Lower leg skin (tissue), 4 donors: ENCODE measurements at regions of chr9 and their contacts with region 1.

Region 1: DNA sequence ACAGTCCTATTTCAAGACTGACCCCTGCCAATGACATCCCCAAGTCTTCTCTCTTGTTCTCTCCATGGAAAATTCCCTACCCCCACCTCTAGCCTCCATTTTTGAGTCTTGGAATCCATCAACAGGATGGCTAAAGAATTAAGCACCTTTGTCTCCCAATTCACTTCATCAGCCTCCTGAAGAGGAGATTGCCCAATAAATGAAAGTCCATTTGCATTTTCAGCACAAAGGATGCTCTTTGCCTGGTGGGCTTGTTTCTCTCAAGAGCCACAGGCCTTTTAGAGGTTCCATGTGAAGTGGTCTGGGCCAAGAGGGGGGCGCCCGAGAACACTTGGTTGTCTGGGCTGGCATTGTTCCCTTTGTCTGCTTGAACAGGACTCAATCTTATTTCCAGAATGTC is 12.6 kb downstream of the HSD17B3 start:
- DNase-seq: no peak
- H3K4me3 ChIP-seq: no peak overlapping the region
- CTCF ChIP-seq: no peak
- POLR2A ChIP-seq: no peak

Region 2: GRCh38 chr9:95102001-95102433 is 1187.4 kb before region 1 on chr9:
- intact Hi-C with region 1: no loop called
- DNase-seq: peak in 1 of 2 donors; percentile 62
- H3K4me3 ChIP-seq: no peak overlapping the region
- CTCF ChIP-seq: no peak
- POLR2A ChIP-seq: no peak

Region 3: DNA sequence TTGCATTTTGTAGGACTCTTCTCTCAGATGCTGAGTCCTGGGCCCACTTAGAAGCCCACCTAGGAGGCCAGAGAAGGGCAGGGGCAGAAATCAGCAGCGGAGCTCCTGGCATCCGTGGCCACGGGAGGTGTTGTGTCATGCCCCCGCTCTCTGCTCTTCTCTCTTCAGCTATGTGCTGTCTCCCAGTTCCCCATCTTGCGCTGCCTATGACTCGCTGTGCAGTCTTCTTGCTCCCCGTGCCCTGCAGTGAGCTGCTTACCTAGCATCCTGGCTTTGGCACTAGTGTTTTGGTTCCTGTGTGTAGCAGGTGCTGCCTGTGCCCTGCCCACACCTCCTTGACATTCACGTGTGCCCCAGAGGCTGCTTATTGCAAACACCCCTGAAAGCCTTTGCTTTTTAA is 685.9 kb before region 1 on chr9:
- intact Hi-C with region 1: loop called (anchors 5 kb)
- DNase-seq: peak in 1 of 2 donors; percentile 32
- H3K4me3 ChIP-seq: no peak overlapping the region
- CTCF ChIP-seq: no peak
- POLR2A ChIP-seq: no peak